ENCODE measurements at regions of chr6 and their contacts with region 1.

Region 1: GRCh38 chr6:44918671-44919292 is 409.3 kb upstream of the RUNX2 start:
- DNase-seq: no peak
- H3K4me3 ChIP-seq: no peak overlapping the region
- H3K27ac ChIP-seq: no peak overlapping the region
- H3K4me1 ChIP-seq: no peaks in the 10 kb centered on the region
- H3K27me3 ChIP-seq: no peaks in the 10 kb centered on the region
- CTCF ChIP-seq: no peak
- POLR2A ChIP-seq: no peak

Region 2: GRCh38 chr6:44906761-44907160 is 12.0 kb before region 1 on chr6:
- intact Hi-C with region 1: loop called (anchors 1 kb)
- DNase-seq: no peak
- H3K4me3 ChIP-seq: no peak overlapping the region
- H3K27ac ChIP-seq: no peak overlapping the region
- H3K4me1 ChIP-seq: no peaks in the 10 kb centered on the region
- H3K27me3 ChIP-seq: no peaks in the 10 kb centered on the region
- CTCF ChIP-seq: no peak
- POLR2A ChIP-seq: no peak

Measured in breast epithelium (tissue), 4 donors.